Activated naive CD8-positive, alpha-beta T cell treated with anti-CD3 and anti-CD28 coated beads, Interleukin-2, amount 10 ng/mL, durations not matched to agents 7 days and 5 days (primary cell): ENCODE measurements at regions of chr1 and their contacts with region 1.

Region 1: DNA sequence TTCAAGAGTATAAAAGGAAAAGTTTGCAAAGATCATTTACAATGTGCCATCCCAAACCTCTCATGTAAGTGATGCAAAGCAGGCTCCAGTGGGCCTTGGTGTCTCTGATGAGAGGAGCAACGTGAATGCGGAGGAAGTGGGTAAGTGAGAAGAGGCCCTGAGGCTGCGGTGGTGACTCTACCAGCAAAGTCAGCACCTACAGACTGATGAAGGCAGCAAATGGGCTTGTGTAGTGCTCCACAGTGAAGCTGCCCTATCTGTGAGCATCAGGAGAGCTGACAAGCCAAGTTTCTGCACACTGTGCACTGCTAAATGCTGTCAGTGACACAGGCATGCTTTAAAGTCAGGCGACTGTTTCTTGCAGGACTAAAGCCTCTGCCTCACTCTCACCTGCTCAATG is 15.6 kb upstream of the RAP1A start:
- DNase-seq: peak; percentile 73
- ATAC-seq: peak; percentile 99
- H3K4me3 Mint-ChIP-seq: peak overlapping the region; percentile 65
- H3K27ac Mint-ChIP-seq: peak overlapping the region; percentile 90
- H3K4me1 Mint-ChIP-seq: peaks cover 53% of the 10 kb centered on the region
- H3K27me3 Mint-ChIP-seq: no peaks in the 10 kb centered on the region

Region 2: GRCh38 chr1:111516005-111516535 is 87.9 kb before region 1 on chr1:
- POLR2A ChIA-PET with region 1: interaction called, 14 read pairs
- DNase-seq: peak; percentile 66
- ATAC-seq: peak; percentile 74
- H3K4me3 Mint-ChIP-seq: peak overlapping the region; percentile 74
- H3K27ac Mint-ChIP-seq: peak overlapping the region; percentile 90
- H3K4me1 Mint-ChIP-seq: peaks cover 52% of the 10 kb centered on the region
- H3K27me3 Mint-ChIP-seq: no peaks in the 10 kb centered on the region

Region 3: DNA sequence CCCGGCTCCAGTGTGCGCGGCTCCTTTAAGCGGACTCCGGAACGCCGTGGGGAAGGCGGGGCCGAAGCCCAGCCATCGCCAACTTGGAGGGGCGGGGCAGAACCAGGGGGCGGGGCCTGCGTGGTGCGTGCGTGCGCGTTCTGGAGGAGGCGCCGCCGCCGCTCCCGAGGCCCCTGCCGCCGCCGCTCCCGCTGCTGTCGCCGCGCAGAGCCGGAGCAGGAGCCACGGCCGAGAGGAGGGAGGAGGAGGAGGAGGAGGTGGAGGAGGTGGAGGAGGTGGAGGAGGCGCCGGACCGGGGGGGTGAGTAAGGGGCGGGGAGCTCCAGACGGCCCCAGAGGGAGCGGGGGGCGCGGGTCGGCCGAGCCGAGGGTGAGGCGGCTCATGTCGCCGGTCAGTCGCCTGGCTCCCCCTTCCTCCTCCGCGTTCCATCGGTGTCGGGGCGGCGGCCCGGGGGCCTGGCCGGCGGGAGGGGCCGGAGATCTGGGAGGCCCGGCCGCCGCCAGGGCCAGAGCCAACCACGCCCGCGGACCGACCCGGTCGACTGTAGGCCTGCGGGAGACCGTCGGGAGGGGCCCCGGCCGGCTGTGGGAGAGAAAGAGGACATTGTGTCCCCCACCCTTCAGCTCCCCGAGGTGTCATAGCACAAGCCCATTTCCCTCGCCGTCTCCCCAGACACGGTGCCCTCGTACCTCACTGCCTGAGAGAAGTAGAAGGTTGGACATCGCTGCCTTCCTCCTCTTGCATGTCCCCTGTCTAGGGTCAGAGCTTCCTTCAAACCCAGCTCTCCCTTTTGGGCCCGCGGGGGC is 15.9 kb after region 1 on chr1 and contains the start of gene RAP1A:
- POLR2A ChIA-PET with region 1: interaction called, 42 read pairs
- DNase-seq: peak; percentile 95
- ATAC-seq: peak; percentile 69
- H3K4me3 Mint-ChIP-seq: peak within 1 kb of the TSS; percentile 99
- H3K27ac Mint-ChIP-seq: peak within 1 kb of the TSS; percentile 91
- H3K4me1 Mint-ChIP-seq: peaks cover 56% of the 10 kb centered on the region
- H3K27me3 Mint-ChIP-seq: no peaks in the 10 kb centered on the region
- total RNA-seq, gene RAP1A: 134 to 139 TPM

Region 4: GRCh38 chr1:111633736-111634247 is 29.8 kb after region 1 on chr1:
- POLR2A ChIA-PET with region 1: no interaction called
- DNase-seq: no peak
- ATAC-seq: no peak
- H3K4me3 Mint-ChIP-seq: no peak overlapping the region
- H3K27ac Mint-ChIP-seq: no peak overlapping the region
- H3K4me1 Mint-ChIP-seq: peaks cover 51% of the 10 kb centered on the region
- H3K27me3 Mint-ChIP-seq: no peaks in the 10 kb centered on the region